Activated CD4-positive, alpha-beta memory T cell treated with anti-CD3 and anti-CD28 coated beads for 36 hours (primary cell): ENCODE measurements at regions of chr14 and their contacts with region 1.

Region 1: DNA sequence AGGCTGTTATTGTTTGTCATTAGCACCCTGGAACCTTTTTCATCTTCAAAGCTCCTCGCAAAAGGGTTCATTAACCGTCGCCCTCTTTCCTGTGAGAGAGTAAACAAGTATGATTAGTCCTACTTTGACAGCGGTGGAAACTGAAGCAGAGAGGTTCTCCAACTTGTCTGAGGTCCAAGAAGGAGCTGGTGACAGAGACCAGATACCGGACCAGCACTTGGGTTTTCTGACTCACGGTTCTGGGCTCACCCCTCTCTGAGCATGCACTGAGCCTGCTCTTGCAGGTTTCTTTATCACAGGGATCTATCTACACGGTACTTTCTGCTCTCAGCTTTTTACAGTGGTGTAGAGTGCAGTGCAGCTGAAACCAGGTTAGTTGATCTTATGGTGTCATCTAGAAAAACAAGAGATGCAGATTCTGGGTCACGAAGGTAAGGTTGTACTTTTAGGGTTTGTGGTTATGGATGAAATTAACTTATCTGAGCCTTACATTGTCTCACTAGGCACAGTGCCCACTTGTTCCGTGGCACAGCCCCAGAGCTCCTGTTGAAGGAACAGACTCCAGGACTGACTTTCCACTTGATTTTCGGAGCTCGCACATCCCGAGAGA is 62.1 kb downstream of the PPP2R5C start:
- DNase-seq: peak; percentile 90
- H3K4me3 Mint-ChIP-seq: peak overlapping the region; percentile 83
- H3K27ac Mint-ChIP-seq: peak overlapping the region; percentile 99
- H3K4me1 Mint-ChIP-seq: peaks cover 82% of the 10 kb centered on the region
- H3K27me3 Mint-ChIP-seq: no peaks in the 10 kb centered on the region

Region 2: DNA sequence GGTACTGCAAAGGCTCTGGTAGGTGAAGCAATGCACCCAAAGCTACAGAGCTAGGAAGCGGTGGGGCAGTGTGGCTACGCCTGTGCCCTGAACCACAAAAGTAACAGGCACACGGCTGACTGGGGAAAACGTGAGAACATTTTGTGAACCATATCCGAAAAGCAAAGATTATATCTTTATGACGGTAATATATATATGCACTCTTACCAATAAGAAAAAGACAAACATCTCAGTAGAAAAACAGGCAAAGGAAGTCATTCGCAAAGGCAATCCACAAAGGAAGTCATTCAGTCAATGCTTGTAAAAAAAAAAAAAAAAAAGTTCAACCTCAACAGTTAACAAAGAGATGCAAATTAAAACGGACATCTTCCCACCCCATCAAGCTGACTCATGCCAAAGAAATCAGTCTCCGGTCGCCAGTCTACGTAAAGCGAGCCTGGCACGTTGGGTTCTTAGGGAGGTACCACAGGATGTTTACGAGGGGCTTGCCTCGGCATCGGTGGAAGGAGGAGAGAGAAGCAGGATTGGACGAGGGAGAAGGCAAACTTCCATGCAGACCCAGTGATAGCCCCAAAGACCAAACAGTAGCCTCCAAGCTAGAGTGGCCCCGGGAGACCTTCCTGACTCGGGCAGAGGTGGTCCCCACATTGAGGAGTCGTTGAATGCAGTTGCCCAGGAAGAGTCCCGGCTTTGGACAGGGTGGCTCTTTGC is 101.5 kb before region 1 on chr14:
- CTCF ChIA-PET with region 1: no interaction called
- POLR2A ChIA-PET with region 1: interaction called, 10 read pairs
- intact Hi-C with region 1: no loop called
- DNase-seq: peak; percentile 86
- H3K4me3 Mint-ChIP-seq: peak overlapping the region; percentile 77
- H3K27ac Mint-ChIP-seq: peak overlapping the region; percentile 99
- H3K4me1 Mint-ChIP-seq: peaks cover 45% of the 10 kb centered on the region
- H3K27me3 Mint-ChIP-seq: no peaks in the 10 kb centered on the region

Region 3: GRCh38 chr14:101767618-101768362 is 55.8 kb before region 1 on chr14:
- CTCF ChIA-PET with region 1: interaction called, 15 read pairs
- POLR2A ChIA-PET with region 1: interaction called, 12 read pairs
- intact Hi-C with region 1: no loop called
- DNase-seq: no peak
- H3K4me3 Mint-ChIP-seq: no peak overlapping the region
- H3K27ac Mint-ChIP-seq: no peak overlapping the region
- H3K4me1 Mint-ChIP-seq: peaks cover 37% of the 10 kb centered on the region
- H3K27me3 Mint-ChIP-seq: no peaks in the 10 kb centered on the region

Region 4: GRCh38 chr14:101843665-101844064 is 20.0 kb after region 1 on chr14:
- CTCF ChIA-PET with region 1: interaction called, 10 read pairs
- POLR2A ChIA-PET with region 1: interaction called, 80 read pairs
- intact Hi-C with region 1: loop called (anchors 2 kb)
- DNase-seq: peak; percentile 83
- H3K4me3 Mint-ChIP-seq: no peak overlapping the region
- H3K27ac Mint-ChIP-seq: peak overlapping the region; percentile 85
- H3K4me1 Mint-ChIP-seq: peaks cover 87% of the 10 kb centered on the region
- H3K27me3 Mint-ChIP-seq: no peaks in the 10 kb centered on the region

Region 5: GRCh38 chr14:102020058-102020971 is 196.7 kb after region 1 on chr14:
- CTCF ChIA-PET with region 1: no interaction called
- POLR2A ChIA-PET with region 1: no interaction called
- intact Hi-C with region 1: loop called (anchors 1 kb)
- DNase-seq: peak; percentile 80
- H3K4me3 Mint-ChIP-seq: no peak overlapping the region
- H3K27ac Mint-ChIP-seq: peak overlapping the region; percentile 85
- H3K4me1 Mint-ChIP-seq: peaks cover 23% of the 10 kb centered on the region
- H3K27me3 Mint-ChIP-seq: no peaks in the 10 kb centered on the region